Heart right ventricle (tissue), 16 donors: ENCODE measurements at regions of chr5 and their contacts with region 1.

Region 1: DNA sequence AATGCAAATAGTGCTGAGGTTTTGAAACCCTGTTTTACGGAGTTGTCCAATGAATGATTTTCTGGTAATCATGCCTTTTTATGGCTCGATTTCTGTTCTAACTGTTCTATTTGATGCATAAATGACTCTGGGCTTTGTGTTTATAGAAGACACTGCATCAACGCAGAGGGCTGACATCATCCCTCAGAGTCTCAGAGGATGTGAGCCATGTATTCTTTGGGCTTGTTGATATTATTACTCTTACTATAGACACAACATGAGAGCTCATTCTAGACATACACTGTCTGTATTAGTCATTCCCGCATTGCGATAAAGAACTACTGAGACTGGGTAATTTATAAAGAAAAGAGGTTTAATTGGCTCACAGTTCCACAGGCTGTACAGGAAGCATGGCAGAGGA is 31.6 kb downstream of the CDH6 start:
- DNase-seq: peak in 1 of 2 donors; percentile 7
- ATAC-seq: peak in 5 of 8 donors; percentile 32 to 63 (median 44)
- H3K4me3 ChIP-seq: no peak overlapping the region
- H3K27ac ChIP-seq: peak overlapping the region in 3 of 10 donors; percentile 17 to 37 (median 26)
- H3K4me1 ChIP-seq: peaks cover 0 to 13% (median 4%) of the 10 kb centered on the region in 9 donors
- H3K27me3 ChIP-seq: peaks cover 0 to 5% (median 0%) of the 10 kb centered on the region in 7 donors
- CTCF ChIP-seq: no peak

Region 2: GRCh38 chr5:31193591-31194467 is 31.3 kb before region 1 on chr5 and contains the start of gene CDH6:
- intact Hi-C with region 1: loop called in 2 of 10 experiments (anchors 5 kb)
- DNase-seq: peak; percentile 4 to 28
- ATAC-seq: peak in 7 of 8 donors; percentile 50 to 82 (median 64)
- H3K4me3 ChIP-seq: peak within 1 kb of the TSS; percentile 26 to 62 (median 54)
- H3K27ac ChIP-seq: peak within 1 kb of the TSS in 9 of 10 donors; percentile 5 to 74 (median 64)
- H3K4me1 ChIP-seq: peaks cover 0 to 21% (median 4%) of the 10 kb centered on the region in 9 donors
- H3K27me3 ChIP-seq: peaks cover 0 to 74% (median 50%) of the 10 kb centered on the region in 7 donors
- CTCF ChIP-seq: no peak
- total RNA-seq, gene CDH6: 1.8 to 7.5 (median 3.6) TPM